Motor neuron (in vitro differentiated cells): ENCODE measurements at regions of chr4 and their contacts with region 1.

Region 1: DNA sequence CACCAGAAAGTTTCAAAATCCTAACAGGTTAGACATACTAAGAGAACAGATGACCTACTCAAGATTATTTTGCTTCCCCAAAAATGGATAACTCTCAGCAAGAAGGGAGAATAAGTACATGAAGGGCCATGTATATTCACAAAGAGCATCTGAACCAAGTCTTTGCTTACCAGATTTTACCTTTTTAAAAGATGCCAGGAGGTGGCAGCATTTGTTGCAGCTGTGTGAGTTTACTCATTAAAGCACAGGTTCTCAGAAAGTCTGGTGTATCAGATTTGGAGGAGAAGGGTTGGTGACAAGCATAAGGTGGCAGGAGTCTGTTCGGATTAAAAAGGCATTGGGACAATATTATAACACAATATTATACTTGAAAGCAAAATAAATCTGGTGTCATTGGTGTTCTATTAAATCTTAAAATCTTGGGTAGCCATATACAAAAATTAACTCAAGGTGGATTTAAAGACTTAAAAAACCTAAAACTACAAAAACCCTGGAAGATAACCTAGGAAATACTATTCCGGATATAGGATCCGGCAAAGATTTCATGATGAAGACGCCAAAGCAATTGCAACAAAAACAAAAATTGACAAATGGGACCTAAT is 51.3 kb upstream of the NFKB1 start:
- ATAC-seq: peak; percentile 40 to 80 (median 61)
- H3K4me3 ChIP-seq: no peak overlapping the region
- H3K27ac ChIP-seq: no peak overlapping the region
- H3K4me1 ChIP-seq: no peaks in the 10 kb centered on the region

Region 2: GRCh38 chr4:102586644-102587021 is 136.8 kb after region 1 on chr4:
- in situ Hi-C with region 1: loop called in 1 of 9 experiments (anchors 10 kb)
- ATAC-seq: no peak
- H3K4me3 ChIP-seq: no peak overlapping the region
- H3K27ac ChIP-seq: no peak overlapping the region
- H3K4me1 ChIP-seq: no peaks in the 10 kb centered on the region

Region 3: DNA sequence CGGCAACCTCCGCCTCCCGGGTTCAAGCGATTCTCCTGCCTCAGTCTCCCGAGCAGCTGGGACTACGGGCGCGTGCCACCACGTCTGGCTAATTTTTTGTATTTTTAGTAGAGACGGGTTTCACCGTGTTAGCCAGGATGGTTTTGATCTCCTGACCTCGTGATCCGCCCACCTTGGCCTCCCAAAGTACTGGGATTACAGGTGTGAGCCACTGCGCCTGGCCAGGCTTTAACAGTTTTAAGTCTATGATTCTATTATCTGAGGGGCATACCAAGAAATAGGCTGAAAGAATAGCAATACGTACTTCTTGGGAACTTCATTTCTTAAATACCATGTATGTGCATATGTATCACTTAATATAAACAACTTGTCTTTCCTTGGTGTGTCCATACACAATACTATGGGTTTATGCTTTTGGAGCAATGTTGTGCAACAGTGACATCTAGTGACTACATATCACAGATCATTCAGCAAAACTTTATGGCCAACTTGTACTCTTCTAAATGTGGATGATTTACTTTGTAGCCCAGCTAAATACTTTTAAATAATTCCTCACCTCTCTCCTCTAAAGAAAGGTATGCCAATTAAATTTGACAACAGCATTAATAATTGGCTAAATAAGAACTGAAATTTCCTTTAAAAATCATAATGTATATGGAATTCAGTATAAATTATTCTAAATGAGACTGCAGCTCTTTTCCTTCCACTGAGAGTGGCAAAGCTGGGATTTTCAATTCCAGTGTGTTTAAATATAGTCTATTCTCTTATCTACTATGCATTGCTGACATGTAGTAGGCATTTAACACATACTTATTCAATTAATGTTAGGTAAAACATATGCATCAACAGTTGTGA is 559.2 kb after region 1 on chr4:
- in situ Hi-C with region 1: loop called in 4 of 9 experiments (anchors 10 to 25 kb)
- ATAC-seq: peak; percentile 42 to 82 (median 64)
- H3K4me3 ChIP-seq: no peak overlapping the region
- H3K27ac ChIP-seq: no peak overlapping the region
- H3K4me1 ChIP-seq: no peaks in the 10 kb centered on the region

Region 4: GRCh38 chr4:103019308-103020124 is 569.7 kb after region 1 on chr4 and contains the start of gene SLC9B1:
- in situ Hi-C with region 1: loop called in 3 of 9 experiments (anchors 25 kb)
- ATAC-seq: peak; percentile 57 to 99 (median 93)
- H3K4me3 ChIP-seq: peak within 1 kb of the TSS in 3 of 5 donors; percentile 16 to 27 (median 23)
- H3K27ac ChIP-seq: no peak within 1 kb of the TSS
- H3K4me1 ChIP-seq: no peaks in the 10 kb centered on the region
- total RNA-seq, gene SLC9B1: 0.28 to 9.1 (median 0.81) TPM

Region 5: DNA sequence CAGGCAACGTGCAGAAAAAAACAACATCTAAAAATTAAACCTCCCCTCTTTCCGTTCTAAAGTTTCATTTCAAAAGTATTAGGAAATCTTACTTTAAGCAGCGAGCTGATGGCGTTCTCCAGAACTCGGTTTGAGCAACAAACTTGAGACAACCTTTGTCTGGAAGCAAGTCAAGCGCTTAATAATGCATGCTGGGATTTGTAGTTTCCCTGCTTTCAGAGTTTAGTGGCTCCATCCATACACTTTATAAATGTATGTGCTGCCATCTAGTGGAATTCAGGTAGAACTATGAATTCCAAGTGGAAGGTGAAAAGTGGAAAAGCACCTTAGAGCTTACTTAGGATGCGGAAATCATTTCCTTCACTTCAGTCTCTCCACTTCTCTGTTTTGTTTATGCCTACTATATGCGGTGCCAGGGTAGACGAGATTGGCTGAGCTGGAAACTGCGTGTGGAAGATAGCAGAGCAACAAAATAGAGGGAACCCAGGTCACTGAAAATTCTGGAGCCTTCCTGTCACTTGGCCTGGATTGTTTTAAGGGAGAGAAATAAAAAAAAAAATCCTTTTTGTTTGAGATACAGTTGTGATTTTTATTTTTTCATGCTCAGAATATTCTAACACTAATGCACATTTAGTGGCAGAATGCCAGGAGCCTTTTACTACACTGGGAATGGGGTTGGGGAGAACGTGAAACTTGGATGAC is 650.0 kb after region 1 on chr4 and contains the start of gene BDH2:
- in situ Hi-C with region 1: loop called in 1 of 9 experiments (anchors 25 kb)
- ATAC-seq: peak; percentile 90 to 96 (median 93)
- H3K4me3 ChIP-seq: peak within 1 kb of the TSS; percentile 31 to 40 (median 35)
- H3K27ac ChIP-seq: no peak within 1 kb of the TSS
- H3K4me1 ChIP-seq: peaks cover 0 to 4% of the 10 kb centered on the region in 2 donors
- total RNA-seq, gene BDH2: 17.0 to 91.9 (median 34.3) TPM